Posterior vena cava (tissue), 2 donors: ENCODE measurements at regions of chr19 and their contacts with region 1.

Region 1: DNA sequence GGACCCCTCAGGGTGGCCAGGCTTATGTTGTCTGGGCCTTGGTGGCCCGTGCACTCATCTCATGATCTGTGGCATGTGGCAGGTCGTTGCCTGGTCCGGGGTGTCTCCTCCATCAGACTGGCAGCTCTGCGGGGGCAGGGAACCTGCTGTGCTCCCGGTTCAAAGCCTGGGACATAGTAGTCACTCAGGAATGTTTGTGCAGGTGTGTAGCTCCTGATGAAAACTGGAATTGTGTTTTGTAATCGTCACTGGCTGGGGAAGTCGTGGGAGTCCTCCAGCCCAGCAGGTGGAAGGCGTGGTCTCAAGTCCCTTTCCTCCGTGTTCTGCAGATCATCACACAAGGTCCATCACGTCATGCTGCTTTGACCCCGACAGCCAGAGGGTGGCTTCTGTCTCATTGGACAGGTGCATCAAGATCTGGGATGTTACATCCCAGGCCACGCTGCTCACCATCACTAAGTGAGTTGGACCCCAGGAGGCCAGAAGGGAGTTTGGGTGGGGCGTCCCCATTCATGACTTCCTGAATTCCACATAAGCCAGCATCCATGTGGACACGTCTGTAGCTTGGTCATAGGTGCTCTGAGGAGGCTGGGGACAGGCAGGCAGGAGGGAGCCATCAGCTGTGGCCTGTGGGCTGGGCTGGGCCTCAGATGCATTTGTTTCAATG is 19.1 kb downstream of the WDR88 start:
- DNase-seq: no peak

Region 2: GRCh38 chr19:33176670-33177416 is 25.9 kb after region 1 on chr19:
- intact Hi-C with region 1: loop called in 1 of 2 experiments (anchors 2 kb)
- DNase-seq: peak; percentile 98